HepG2 (cell line): ENCODE measurements at regions of chr1 and their contacts with region 1.

Region 1: DNA sequence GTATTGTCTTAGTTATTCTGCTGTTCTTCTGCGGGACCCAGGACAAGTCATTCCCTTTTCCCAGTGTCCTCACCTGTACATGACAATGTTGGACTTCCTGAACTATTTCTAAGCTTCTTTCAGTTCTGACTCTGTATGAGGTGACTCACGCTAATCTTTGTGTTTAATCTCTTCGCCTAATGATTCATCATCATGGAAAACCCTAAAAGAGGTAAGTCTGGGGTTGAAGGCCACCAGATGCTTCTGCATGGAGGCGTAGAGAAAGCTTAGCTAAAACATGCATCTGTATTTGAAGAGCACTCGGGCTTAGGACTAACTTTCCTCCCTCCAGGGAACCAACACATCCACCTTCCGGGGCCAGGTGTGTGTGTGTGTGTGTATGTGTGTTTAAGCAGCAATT is 7.4 kb downstream of the SPRR5 start:
- DNase-seq: no peak
- ATAC-seq: no peak
- H3K4me3 ChIP-seq: no peak overlapping the region
- H3K27ac ChIP-seq: no peak overlapping the region
- H3K4me1 ChIP-seq: no peaks in the 10 kb centered on the region
- H3K27me3 ChIP-seq: peaks cover 0 to 6% of the 10 kb centered on the region in 2 experiments; a peak in 1 of 5 replicates
- CTCF ChIP-seq: no peak
- EP300 ChIP-seq: no peak
- POLR2A ChIP-seq: no peak
- RAD21 ChIP-seq: no peak

Region 2: GRCh38 chr1:152899883-152900282 is 54.6 kb before region 1 on chr1:
- CTCF ChIA-PET with region 1: no interaction called
- POLR2A ChIA-PET with region 1: no interaction called
- in situ Hi-C with region 1: no loop called
- intact Hi-C with region 1: loop called (anchors 10 kb)
- DNase-seq: no peak
- ATAC-seq: no peak
- H3K4me3 ChIP-seq: no peak overlapping the region
- H3K27ac ChIP-seq: no peak overlapping the region
- H3K4me1 ChIP-seq: no peaks in the 10 kb centered on the region
- H3K27me3 ChIP-seq: peaks cover 0 to 7% of the 10 kb centered on the region in 2 experiments; a peak in 1 of 5 replicates
- CTCF ChIP-seq: no peak
- EP300 ChIP-seq: no peak
- POLR2A ChIP-seq: no peak
- RAD21 ChIP-seq: no peak

Region 3: GRCh38 chr1:153032677-153033308 is 78.4 kb after region 1 on chr1:
- CTCF ChIA-PET with region 1: no interaction called
- POLR2A ChIA-PET with region 1: no interaction called
- in situ Hi-C with region 1: no loop called
- intact Hi-C with region 1: no loop called
- DNase-seq: peak; percentile 33
- ATAC-seq: peak; percentile 75
- H3K4me3 ChIP-seq: no peak overlapping the region
- H3K27ac ChIP-seq: no peak overlapping the region
- H3K4me1 ChIP-seq: no peaks in the 10 kb centered on the region
- H3K27me3 ChIP-seq: no peaks in the 10 kb centered on the region
- CTCF ChIP-seq: peak; percentile 53
- EP300 ChIP-seq: no peak
- POLR2A ChIP-seq: no peak
- RAD21 ChIP-seq: no peak

Region 4: DNA sequence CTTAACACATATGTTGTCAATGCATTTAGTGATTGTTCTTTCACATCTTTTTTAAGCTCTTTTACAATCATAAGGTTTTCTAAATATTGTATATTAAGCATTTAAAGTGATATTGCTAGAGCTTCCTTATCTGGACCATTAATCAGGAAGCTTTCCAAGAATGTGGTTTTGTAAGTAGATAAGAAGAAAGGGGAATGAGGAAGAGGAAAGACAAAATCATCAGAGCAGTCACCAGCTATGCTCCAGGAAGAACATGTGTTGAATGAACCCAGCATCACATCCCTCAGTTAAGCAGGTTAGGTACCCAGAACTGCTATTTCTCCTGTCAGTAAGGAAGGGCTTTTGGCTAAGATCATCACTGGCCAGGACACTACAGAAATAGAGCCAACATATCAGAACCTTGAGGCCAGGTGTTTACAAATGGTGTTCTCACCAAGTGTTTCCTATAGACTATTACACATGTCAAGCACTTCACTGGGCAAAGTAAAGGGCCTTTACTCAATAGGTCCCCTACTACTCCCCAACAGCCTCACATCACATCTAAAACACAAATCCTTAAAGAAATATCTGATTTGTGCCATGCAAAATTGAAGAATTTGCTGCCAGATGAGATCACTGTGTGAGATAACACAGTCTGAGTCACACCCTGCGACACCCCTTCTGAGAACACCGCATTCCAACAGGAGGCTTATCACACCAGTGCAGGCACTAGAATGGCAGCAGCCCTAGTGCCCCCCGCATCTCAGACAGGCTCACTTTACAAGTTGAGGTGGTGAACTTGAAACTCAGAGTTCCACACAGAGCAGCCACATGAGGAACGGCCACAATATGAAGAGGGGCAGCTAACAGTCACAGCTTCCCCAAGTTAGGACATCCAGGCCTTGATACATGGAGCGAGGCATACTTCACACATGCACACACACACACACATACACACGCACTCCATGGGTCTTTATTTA is 104.7 kb after region 1 on chr1:
- CTCF ChIA-PET with region 1: no interaction called
- POLR2A ChIA-PET with region 1: no interaction called
- in situ Hi-C with region 1: no loop called
- intact Hi-C with region 1: no loop called
- DNase-seq: no peak
- ATAC-seq: no peak
- H3K4me3 ChIP-seq: no peak overlapping the region
- H3K27ac ChIP-seq: no peak overlapping the region
- H3K4me1 ChIP-seq: no peaks in the 10 kb centered on the region
- H3K27me3 ChIP-seq: no peaks in the 10 kb centered on the region
- CTCF ChIP-seq: no peak
- EP300 ChIP-seq: no peak
- POLR2A ChIP-seq: no peak
- RAD21 ChIP-seq: no peak

Region 5: DNA sequence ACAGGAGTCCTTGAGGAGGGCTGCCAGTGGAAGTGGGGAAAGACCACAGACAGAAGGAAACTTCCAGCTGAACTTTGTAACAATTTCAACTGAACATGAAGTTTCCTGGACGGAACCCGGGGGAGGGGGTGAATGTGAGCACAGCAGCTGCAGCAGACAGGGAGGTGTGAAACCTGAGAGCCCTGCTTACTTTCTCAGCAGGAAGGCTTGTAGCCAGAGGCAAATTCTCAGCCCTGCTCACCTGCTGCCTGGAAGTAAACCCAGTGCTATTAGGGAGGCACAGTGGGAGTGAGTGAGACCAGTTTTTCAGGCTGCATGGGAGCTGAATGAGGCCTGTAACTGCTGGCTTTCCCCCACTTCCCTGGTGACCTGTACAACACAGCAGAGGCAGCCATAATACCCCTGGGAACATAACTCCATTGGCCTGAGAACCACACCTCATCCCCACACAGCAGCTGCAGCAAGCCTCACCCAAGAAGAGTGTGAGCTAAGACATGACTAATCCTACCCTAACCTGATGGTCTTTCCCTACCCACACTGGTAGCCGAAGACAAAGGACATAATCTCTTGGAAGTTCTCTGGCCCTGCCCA is 168.5 kb after region 1 on chr1:
- CTCF ChIA-PET with region 1: no interaction called
- POLR2A ChIA-PET with region 1: no interaction called
- in situ Hi-C with region 1: no loop called
- intact Hi-C with region 1: no loop called
- DNase-seq: no peak
- ATAC-seq: no peak
- H3K4me3 ChIP-seq: no peak overlapping the region
- H3K27ac ChIP-seq: no peak overlapping the region
- H3K4me1 ChIP-seq: no peaks in the 10 kb centered on the region
- H3K27me3 ChIP-seq: no peaks in the 10 kb centered on the region
- CTCF ChIP-seq: no peak
- EP300 ChIP-seq: no peak
- POLR2A ChIP-seq: no peak
- RAD21 ChIP-seq: no peak